Activated CD4-positive, alpha-beta T cell treated with anti-CD3 and anti-CD28 coated beads for 36 hours (primary cell): ENCODE measurements at regions of chr2 and their contacts with region 1.

Region 1: GRCh38 chr2:39403311-39403710 is 33.8 kb downstream of the MAP4K3 start:
- DNase-seq: peak; percentile 44
- ATAC-seq: peak; percentile 81
- H3K4me3 Mint-ChIP-seq: no peak overlapping the region
- H3K27ac Mint-ChIP-seq: peak overlapping the region; percentile 19
- H3K4me1 Mint-ChIP-seq: peaks cover 67% of the 10 kb centered on the region
- H3K27me3 Mint-ChIP-seq: no peaks in the 10 kb centered on the region

Region 2: DNA sequence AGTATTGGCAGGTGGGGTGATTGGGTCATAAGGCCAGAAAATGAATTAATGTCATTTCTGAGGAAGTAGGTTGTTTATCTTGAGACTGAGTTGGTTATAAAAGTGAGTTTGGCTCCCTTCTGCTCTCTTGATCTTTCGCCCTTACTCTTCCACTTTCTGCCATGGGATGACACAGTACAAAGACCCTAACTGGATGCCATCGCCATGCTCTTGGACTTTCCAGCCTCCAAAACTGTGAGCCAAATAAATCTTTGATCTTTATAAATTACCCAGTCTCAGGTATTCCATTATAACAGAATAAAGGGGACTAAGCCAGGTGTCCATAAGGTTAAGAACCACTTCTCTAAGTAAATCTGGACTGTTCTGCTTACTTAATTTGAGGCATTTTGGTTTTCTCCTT is 10.6 kb before region 1 on chr2:
- CTCF ChIA-PET with region 1: no interaction called
- POLR2A ChIA-PET with region 1: no interaction called
- intact Hi-C with region 1: loop called in 1 of 2 experiments (anchors 1 kb)
- DNase-seq: no peak
- ATAC-seq: no peak
- H3K4me3 Mint-ChIP-seq: no peak overlapping the region
- H3K27ac Mint-ChIP-seq: no peak overlapping the region
- H3K4me1 Mint-ChIP-seq: peaks cover 25% of the 10 kb centered on the region
- H3K27me3 Mint-ChIP-seq: no peaks in the 10 kb centered on the region